ENCODE measurements at regions of chr17 and their contacts with region 1.

Region 1: DNA sequence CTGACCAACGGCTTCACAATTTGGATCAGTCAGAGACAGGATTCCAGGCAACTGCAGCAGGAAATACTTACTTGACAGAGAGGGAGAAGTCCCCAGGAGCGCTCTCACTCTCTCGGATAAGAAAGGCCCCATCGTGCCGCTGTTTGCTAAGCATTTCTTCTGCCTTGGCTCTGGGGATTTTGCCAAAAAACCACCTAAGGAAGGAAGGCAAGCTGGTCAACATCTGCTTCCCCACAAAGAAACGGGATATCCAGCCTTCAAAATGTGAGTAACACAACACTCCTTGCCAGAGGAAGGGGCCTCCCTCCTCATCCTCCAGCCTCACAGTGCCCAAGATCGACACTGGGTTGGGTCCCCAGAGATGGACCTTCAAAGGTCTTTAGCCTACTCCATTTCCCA is 36.6 kb upstream of the SLC25A19 start:
- DNase-seq: no peak
- ATAC-seq: no peak
- H3K4me3 ChIP-seq: no peak overlapping the region
- H3K4me1 ChIP-seq: no peaks in the 10 kb centered on the region
- CTCF ChIP-seq: no peak

Region 2: GRCh38 chr17:75404181-75404730 is 78.4 kb after region 1 on chr17:
- intact Hi-C with region 1: loop called in 1 of 2 experiments (anchors 5 kb)
- DNase-seq: peak in 2 of 3 donors; percentile 67 to 74
- ATAC-seq: peak; percentile 46
- H3K4me3 ChIP-seq: peak overlapping the region; percentile 100
- H3K4me1 ChIP-seq: peaks cover 14% of the 10 kb centered on the region
- CTCF ChIP-seq: peak; percentile 69

Measured in mucosa of descending colon (tissue), 3 donors.